PC-9 (cell line): ENCODE measurements at regions of chrX and their contacts with region 1.

Region 1: DNA sequence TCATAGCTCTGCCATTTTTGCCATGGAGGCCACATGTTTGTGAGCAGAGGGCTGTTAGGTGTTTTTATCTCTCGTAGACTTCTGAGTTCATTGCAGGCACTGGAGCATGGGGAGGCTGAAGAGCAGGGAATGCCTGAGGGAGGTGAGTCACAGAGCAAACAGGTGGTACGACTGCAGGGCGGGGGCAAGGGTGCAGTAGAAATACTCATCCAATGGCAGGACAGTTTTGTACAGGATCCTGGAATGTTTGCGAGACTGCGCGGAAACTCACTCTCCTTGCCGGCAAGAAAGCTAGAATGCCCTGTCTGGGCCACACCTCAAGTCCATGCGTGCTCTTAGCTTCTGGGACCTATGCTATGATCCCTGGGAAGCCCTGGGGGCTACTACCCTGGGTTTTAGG is 20.0 kb upstream of the VCX2 start:
- DNase-seq: peak; percentile 84 to 85
- H3K4me3 ChIP-seq: no peak overlapping the region
- H3K27ac ChIP-seq: peak overlapping the region; percentile 29; the same call in 1 of the 2 replicates
- H3K4me1 ChIP-seq: peaks cover 13% of the 10 kb centered on the region
- H3K27me3 ChIP-seq: no peaks in the 10 kb centered on the region
- CTCF ChIP-seq: no peak

Region 2: DNA sequence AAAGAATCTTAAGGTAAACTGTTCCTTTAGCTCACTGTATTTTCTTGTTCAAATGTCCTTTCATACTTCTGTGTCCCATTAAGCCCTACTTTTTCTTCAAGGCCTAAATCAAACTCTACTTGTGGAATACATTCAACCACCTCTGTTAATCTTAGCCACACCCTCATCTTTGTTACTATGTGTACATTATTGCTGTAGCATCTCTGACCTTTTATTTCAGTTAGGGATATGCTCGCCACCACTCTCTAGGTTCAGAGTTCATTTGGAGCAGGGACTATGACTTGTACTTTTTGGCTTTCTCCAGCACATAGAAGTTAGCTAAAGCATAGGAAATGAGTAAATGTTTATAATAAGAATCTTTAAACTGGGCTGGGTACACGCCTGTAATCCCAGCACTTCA is 257.0 kb before region 1 on chrX:
- CTCF ChIA-PET with region 1: no interaction called
- POLR2A ChIA-PET with region 1: no interaction called
- intact Hi-C with region 1: no loop called
- DNase-seq: no peak
- H3K4me3 ChIP-seq: no peak overlapping the region
- H3K27ac ChIP-seq: no peak overlapping the region
- H3K4me1 ChIP-seq: no peaks in the 10 kb centered on the region
- H3K27me3 ChIP-seq: no peaks in the 10 kb centered on the region
- CTCF ChIP-seq: no peak

Region 3: GRCh38 chrX:7996414-7996813 is 194.6 kb before region 1 on chrX:
- CTCF ChIA-PET with region 1: no interaction called
- POLR2A ChIA-PET with region 1: no interaction called
- intact Hi-C with region 1: loop called (anchors 5 kb)
- DNase-seq: peak in 1 of 2 experiments; percentile 11
- H3K4me3 ChIP-seq: no peak overlapping the region
- H3K27ac ChIP-seq: no peak overlapping the region
- H3K4me1 ChIP-seq: no peaks in the 10 kb centered on the region
- H3K27me3 ChIP-seq: no peaks in the 10 kb centered on the region
- CTCF ChIP-seq: peak; percentile 75

Region 4: GRCh38 chrX:8138252-8138651 is 52.8 kb before region 1 on chrX:
- CTCF ChIA-PET with region 1: no interaction called
- POLR2A ChIA-PET with region 1: no interaction called
- intact Hi-C with region 1: loop called (anchors 1 kb)
- DNase-seq: no peak
- H3K4me3 ChIP-seq: no peak overlapping the region
- H3K27ac ChIP-seq: no peak overlapping the region
- H3K4me1 ChIP-seq: no peaks in the 10 kb centered on the region
- H3K27me3 ChIP-seq: no peaks in the 10 kb centered on the region
- CTCF ChIP-seq: no peak

Region 5: DNA sequence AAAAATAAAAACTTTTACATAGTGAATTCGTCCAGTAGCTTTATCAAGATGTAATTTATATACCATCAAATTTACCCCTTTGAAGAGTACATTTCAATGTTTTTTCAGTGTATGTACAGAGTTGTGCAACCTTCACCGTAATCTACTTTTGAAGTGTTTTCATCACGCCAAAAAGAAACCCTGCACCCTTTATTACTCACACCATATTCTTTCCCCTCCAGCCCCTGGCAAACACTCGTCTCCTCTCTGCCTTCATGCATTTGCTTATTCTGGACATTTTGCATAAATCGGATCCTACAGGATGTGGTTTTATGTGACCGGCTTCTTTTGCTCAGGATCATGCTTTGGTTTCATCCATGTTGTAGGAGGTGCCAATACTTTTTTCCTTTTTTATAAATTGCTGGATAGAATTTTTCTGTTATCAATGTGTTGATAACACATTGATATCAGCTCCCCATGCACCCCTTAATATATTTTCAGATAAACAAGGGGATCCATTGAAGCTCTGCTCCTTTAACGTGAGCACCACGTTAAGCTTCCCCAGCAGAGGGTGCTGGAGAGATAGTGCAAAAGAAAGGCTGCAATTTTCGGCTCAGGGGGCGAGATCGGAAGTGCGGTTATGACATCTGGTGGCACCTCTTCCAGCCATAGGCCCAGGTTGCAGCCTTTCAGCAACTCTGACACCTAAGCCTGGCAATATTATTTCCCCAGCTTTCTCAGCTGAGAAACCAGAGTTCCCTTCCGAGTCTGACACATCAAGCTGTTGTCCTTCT is 173.5 kb after region 1 on chrX:
- CTCF ChIA-PET with region 1: no interaction called
- POLR2A ChIA-PET with region 1: no interaction called
- intact Hi-C with region 1: loop called (anchors 5 kb)
- DNase-seq: peak in 1 of 2 experiments; percentile 13
- H3K4me3 ChIP-seq: no peak overlapping the region
- H3K27ac ChIP-seq: no peak overlapping the region
- H3K4me1 ChIP-seq: no peaks in the 10 kb centered on the region
- H3K27me3 ChIP-seq: no peaks in the 10 kb centered on the region
- CTCF ChIP-seq: peak; percentile 58

Region 6: DNA sequence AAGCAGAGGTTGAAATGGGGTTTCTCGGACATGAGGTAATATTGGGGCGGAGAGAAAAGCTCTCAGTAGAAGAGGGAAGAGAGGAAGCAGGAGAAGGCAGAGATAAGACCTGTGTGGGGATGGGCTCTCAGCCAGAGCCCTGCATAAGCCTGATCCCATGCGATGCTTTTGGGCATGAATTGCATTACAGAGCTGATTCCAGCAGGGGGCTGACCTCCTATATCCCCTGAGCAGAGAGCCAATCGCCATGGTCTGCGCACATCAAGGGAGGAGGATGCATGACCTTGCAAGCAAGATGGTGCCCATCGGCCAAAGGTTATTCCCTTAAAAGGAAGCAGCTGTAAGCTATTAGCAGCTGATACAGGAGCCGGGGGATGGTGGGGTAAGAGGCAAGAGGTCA is 533.3 kb after region 1 on chrX:
- CTCF ChIA-PET with region 1: no interaction called
- POLR2A ChIA-PET with region 1: no interaction called
- intact Hi-C with region 1: loop called (anchors 5 kb)
- DNase-seq: no peak
- H3K4me3 ChIP-seq: no peak overlapping the region
- H3K27ac ChIP-seq: no peak overlapping the region
- H3K4me1 ChIP-seq: peaks cover 20% of the 10 kb centered on the region
- H3K27me3 ChIP-seq: no peaks in the 10 kb centered on the region
- CTCF ChIP-seq: no peak